ENCODE measurements at regions of chr17 and their contacts with region 1.

Region 1: GRCh38 chr17:49180303-49180702 is 30.1 kb downstream of the GNGT2 start:
- DNase-seq: peak; percentile 7 to 85 (median 52)
- ATAC-seq: peak; percentile 94
- H3K4me3 ChIP-seq: no peak overlapping the region
- H3K27ac ChIP-seq: no peak overlapping the region
- H3K4me1 ChIP-seq: no peaks in the 10 kb centered on the region
- H3K27me3 ChIP-seq: no peaks in the 10 kb centered on the region
- CTCF ChIP-seq: peak; percentile 77 to 79

Region 2: DNA sequence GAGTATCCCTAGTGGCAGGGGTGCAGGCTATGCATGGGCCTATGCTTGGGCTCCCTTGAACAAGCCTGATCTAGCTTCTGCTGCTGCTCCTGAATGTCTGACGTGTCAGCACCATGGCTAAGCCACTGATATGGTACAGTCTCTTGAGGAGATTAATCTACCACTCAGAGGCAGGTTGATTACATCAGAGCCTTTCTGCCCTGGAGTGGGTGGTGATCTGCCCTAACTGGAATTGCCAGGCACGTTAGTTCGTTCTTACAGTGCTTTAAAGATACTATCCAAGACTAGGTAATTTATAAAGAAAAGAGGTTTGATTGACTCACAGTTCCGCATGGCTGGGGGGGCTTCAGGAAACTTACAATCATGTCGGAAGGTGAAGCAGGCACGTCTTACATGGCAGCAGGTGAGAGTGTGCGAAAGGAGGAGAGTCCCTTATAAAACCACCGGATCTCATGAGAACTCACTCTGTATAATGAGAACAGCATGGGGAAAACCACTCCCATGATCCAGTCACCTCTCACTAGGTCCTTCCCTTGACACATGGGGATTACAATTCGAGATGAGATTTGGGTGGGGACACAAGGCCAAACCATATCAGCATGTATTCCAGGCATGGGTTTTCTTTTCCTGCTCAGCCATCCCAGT is 89.2 kb before region 1 on chr17:
- intact Hi-C with region 1: no loop called
- DNase-seq: peak in 1 of 4 donors; percentile 7
- ATAC-seq: no peak
- H3K4me3 ChIP-seq: no peak overlapping the region
- H3K27ac ChIP-seq: no peak overlapping the region
- H3K4me1 ChIP-seq: no peaks in the 10 kb centered on the region
- H3K27me3 ChIP-seq: peaks cover 0 to 7% of the 10 kb centered on the region in 2 donors
- CTCF ChIP-seq: no peak

Region 3: GRCh38 chr17:49223517-49224197 is 43.4 kb after region 1 on chr17:
- intact Hi-C with region 1: loop called in 1 of 2 experiments (anchors 5 kb)
- DNase-seq: peak in 3 of 4 donors; percentile 32 to 91 (median 55)
- ATAC-seq: peak; percentile 56
- H3K4me3 ChIP-seq: peak overlapping the region in 1 of 2 donors; percentile 30
- H3K27ac ChIP-seq: no peak overlapping the region
- H3K4me1 ChIP-seq: peaks cover 0 to 52% of the 10 kb centered on the region in 2 donors
- H3K27me3 ChIP-seq: peaks cover 27 to 85% of the 10 kb centered on the region in 2 donors
- CTCF ChIP-seq: peak; percentile 83 to 91

Region 4: GRCh38 chr17:49290690-49291359 is 110.5 kb after region 1 on chr17:
- intact Hi-C with region 1: loop called in 1 of 2 experiments (anchors 5 kb)
- DNase-seq: peak in 2 of 4 donors; percentile 8 to 35
- ATAC-seq: peak; percentile 50
- H3K4me3 ChIP-seq: no peak overlapping the region
- H3K27ac ChIP-seq: no peak overlapping the region
- H3K4me1 ChIP-seq: no peaks in the 10 kb centered on the region
- H3K27me3 ChIP-seq: no peaks in the 10 kb centered on the region
- CTCF ChIP-seq: peak; percentile 64 to 65

Region 5: DNA sequence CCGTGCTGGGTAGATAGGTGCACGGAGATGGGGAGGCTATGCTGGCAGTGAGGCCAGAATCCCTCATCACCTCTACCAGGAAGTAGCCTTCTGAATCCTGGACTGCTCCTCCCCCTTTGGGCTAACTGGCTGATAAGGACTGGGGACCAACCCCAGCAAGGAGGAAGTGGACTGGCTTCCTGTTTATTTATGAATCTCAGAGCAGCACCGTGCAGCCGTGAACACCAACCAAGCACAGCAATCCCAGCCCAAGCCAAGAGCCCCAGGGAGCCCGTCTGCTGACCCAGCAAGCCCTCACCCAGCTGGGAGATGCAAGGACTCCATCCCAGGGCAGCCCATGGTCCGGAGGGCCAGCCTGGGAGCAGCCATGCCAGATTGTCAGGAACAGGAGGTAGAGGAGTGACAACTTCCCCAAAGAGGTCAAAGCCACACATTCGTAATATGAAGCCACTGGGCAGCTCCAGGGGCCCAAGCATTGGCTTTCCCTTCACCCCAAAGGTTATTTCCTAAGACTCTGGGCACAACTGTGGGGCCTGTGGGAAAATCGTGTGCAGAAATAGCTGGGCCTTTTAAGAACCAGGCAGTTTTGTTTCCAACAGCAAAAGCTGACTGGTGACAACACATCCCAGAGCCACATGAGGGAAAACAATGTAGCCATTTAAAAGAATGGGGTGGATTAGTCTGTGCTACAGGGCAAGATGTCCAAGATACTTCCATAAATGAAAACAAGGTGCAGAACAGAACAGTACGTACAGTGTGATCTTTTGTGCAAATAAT is 210.4 kb after region 1 on chr17:
- intact Hi-C with region 1: no loop called
- DNase-seq: peak in 1 of 4 donors; percentile 52
- ATAC-seq: peak; percentile 55
- H3K4me3 ChIP-seq: peak overlapping the region in 1 of 2 donors; percentile 28
- H3K27ac ChIP-seq: peak overlapping the region; percentile 65 to 97
- H3K4me1 ChIP-seq: peaks cover 0 to 64% of the 10 kb centered on the region in 2 donors
- H3K27me3 ChIP-seq: no peaks in the 10 kb centered on the region
- CTCF ChIP-seq: no peak